GM18951 (cell line): ENCODE measurements at regions of chr15 and their contacts with region 1.

Region 1: DNA sequence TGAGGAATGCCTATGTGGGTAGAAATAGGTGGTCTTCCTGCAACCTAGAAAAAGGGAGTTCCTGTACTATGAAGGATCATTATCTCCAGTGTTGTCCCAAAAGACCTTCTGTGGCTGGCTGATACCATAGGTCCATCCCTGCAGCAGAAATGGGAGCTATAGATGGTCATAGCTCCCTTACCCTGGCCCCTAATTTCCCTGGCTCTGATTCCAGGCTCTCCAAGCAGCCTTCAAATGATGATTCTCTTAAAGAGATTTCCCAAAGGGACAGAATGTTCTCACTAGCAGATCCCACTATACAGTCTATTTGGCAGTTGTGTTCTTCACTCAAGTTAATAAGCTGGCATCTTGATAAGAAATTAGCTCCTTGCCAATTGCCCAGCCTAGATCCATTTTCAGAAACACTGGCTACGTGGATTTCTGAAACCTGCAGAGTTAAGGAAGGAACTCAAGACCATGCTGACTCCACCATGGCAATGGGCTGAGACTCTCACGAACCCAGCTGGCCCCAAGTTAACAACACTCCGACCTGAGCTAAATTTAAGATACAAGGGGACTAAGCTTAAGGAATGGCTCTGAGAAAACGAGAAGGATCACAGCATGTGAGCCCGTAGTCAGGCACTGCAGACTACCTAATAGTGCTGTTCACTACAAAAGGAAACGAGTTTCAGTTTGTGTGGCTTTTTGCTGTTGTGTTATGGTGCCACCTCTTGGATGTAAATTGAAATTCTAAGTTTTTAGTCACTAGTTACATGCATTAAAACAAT is 11.4 kb downstream of the C15orf40 start:
- POLR2A ChIP-seq: no peak

Region 2: GRCh38 chr15:82530606-82531379 is 469.3 kb before region 1 on chr15:
- in situ Hi-C with region 1: loop called (anchors 10 kb)
- POLR2A ChIP-seq: no peak